H1 (cell line): ENCODE measurements at regions of chr1 and their contacts with region 1.

Region 1: DNA sequence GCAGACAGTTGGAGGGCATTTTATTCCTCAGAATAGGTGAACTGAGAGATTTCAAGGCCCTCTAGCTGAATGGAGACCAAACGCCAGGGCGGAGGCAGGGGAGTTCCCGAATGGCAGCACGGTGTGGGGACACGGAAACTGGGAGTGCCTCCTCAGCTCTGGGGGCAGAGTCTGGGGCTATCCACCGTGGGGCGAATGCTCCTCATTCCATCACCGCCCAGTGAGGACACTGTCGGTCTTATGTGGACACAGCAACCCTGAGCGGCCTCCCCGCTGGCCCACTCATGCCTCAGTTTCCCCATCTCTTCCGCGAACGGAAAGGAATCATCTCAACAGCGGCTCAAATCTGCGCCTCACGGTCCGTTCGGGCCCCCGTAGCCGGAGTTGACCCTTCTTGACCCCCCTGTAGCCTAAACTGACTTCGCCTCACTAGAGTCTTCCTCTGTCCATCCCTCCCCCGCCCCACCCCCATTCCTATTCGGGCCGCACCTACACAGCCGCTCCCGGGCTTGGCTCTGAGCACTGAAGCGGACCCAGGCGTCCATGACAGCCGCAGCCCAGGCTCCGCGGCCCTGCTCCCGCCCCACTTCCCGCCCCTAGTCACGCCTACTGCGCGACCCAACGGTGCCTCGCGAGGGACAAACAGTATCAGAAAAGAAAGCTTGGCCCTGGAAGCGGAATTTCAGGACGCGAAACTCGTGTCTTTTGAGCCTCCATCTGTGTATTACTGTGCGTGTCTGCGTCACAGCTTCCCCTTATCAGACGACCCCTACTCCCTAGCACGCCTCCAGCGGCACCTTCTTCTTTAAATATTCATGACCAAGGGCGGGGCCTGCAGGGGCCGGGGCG is at the start of gene PEX11B:
- DNase-seq: peak in 1 of 2 experiments; percentile 92
- H3K4me3 ChIP-seq: peak within 1 kb of the TSS; percentile 71 to 96 (median 82)
- H3K27ac ChIP-seq: no peak within 1 kb of the TSS
- H3K4me1 ChIP-seq: peaks cover 0 to 6% (median 2%) of the 10 kb centered on the region in 4 experiments; a peak in 6 of 7 replicates
- H3K27me3 ChIP-seq: no peaks in the 10 kb centered on the region
- CTCF ChIP-seq: no peak
- EP300 ChIP-seq: no peak
- POLR2A ChIP-seq: 0 out of 3 replicates have a peak, but pooled peaks of 1 of the 2 experiments have one; percentile 11
- RAD21 ChIP-seq: no peak
- total RNA-seq, gene PEX11B: 8.1 and 9.1 TPM in 2 replicates

Region 2: DNA sequence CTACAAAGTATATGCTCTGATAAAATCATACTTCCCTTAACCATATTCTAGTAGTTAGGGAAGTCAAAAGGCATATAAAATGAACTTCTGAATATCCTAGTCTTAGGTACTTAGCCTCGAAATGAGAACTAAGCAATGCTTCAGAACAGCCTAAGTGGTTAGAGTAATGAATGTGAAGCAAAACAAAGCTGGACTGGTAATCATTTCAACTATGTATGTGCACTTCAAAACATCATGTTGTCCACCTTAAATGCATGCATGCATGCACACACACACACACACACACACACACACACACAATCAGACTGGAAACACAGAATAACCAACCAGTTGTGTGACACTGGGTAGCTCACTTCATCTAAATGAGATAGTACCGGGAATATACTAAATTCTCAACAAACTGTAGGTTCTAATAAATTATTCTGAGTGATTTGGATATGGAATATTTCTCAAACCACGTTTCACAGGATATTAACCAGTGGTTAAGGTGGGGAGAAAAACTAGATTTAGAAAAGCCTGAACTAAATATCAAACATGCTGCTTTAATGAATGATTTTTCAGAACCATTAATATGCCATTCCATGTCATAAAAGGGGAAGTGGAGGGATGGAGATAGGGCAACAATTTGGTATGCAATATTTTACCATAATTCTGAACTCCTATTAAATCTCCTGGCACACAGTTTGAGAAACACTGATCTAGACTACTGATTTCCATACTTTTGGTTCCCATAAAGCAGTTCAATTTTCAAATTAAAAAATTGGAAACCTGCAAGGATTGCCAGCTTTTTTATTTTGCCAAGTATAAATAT is 113.9 kb before region 1 on chr1:
- CTCF ChIA-PET with region 1: no interaction called
- POLR2A ChIA-PET with region 1: no interaction called
- DNase-seq: no peak
- H3K4me3 ChIP-seq: no peak overlapping the region
- H3K27ac ChIP-seq: no peak overlapping the region
- H3K4me1 ChIP-seq: peaks cover 0 to 9% (median 1%) of the 10 kb centered on the region in 4 experiments; a peak in 5 of 7 replicates
- H3K27me3 ChIP-seq: no peaks in the 10 kb centered on the region
- CTCF ChIP-seq: no peak
- EP300 ChIP-seq: no peak
- POLR2A ChIP-seq: no peak
- RAD21 ChIP-seq: no peak

Region 3: DNA sequence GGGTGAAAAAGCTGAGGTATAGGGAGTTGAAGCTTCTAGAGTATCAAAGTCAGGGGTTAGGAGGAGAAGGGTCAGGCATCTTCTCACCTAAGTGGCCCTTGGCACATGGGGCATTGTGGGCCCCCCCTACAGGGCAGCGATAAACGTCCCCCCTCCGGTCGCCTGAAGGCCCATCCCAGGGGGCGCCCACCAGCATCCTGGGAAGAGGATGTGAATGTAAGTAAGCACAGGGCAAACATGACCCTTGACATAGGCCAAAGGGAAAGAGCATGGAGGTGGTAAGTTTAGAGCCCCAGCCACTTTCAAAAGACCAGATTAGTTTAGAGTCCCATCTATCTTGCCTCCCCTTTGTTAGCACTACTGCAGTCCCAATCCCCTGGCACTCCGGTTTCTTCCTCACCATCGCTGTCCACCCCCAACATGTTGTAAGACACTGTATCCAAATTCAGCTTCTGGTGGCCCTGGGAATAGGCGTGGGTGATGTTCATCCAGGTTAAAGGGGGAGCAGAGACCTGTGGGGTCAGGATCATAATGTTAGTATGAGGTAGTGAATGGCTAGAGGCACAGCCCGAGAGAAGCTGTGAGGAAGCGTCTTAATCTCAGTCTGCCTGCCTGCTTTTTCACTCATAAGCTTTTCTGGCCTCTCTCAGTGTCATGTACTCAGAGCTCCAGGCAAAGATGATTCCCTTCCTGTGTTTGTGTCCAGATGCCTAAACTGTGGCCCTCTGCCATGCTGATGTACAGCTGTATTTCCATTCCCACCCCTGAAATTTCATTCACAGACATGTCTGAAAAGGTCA is 11.2 kb before region 1 on chr1:
- CTCF ChIA-PET with region 1: interaction called, 12 read pairs
- POLR2A ChIA-PET with region 1: interaction called, 5 read pairs
- DNase-seq: no peak
- H3K4me3 ChIP-seq: no peak overlapping the region
- H3K27ac ChIP-seq: no peak overlapping the region
- H3K4me1 ChIP-seq: peaks cover 0 to 3% (median 0%) of the 10 kb centered on the region in 4 experiments; a peak in 2 of 7 replicates
- H3K27me3 ChIP-seq: no peaks in the 10 kb centered on the region
- CTCF ChIP-seq: no peak
- EP300 ChIP-seq: no peak
- POLR2A ChIP-seq: no peak
- RAD21 ChIP-seq: no peak

Region 4: GRCh38 chr1:145949219-145949618 is 30.9 kb after region 1 on chr1:
- CTCF ChIA-PET with region 1: no interaction called
- POLR2A ChIA-PET with region 1: no interaction called
- DNase-seq: no peak
- H3K4me3 ChIP-seq: no peak overlapping the region
- H3K27ac ChIP-seq: no peak overlapping the region
- H3K4me1 ChIP-seq: peaks cover 0 to 8% (median 2%) of the 10 kb centered on the region in 4 experiments; a peak in 4 of 7 replicates
- H3K27me3 ChIP-seq: no peaks in the 10 kb centered on the region
- CTCF ChIP-seq: no peak
- EP300 ChIP-seq: no peak
- POLR2A ChIP-seq: no peak
- RAD21 ChIP-seq: no peak